Breast epithelium (tissue), 4 donors: ENCODE measurements at regions of chr2 and their contacts with region 1.

Region 1: GRCh38 chr2:221704442-221704841 is 132.3 kb upstream of the EPHA4 start:
- DNase-seq: no peak
- H3K4me3 ChIP-seq: no peak overlapping the region
- H3K27ac ChIP-seq: no peak overlapping the region
- H3K4me1 ChIP-seq: no peaks in the 10 kb centered on the region
- H3K27me3 ChIP-seq: peaks cover 0 to 6% of the 10 kb centered on the region in 2 donors
- CTCF ChIP-seq: no peak
- POLR2A ChIP-seq: no peak

Region 2: GRCh38 chr2:219812672-219813071 is 1891.8 kb before region 1 on chr2:
- intact Hi-C with region 1: loop called (anchors 5 kb)
- DNase-seq: no peak
- H3K4me3 ChIP-seq: no peak overlapping the region
- H3K27ac ChIP-seq: no peak overlapping the region
- H3K4me1 ChIP-seq: no peaks in the 10 kb centered on the region
- H3K27me3 ChIP-seq: no peaks in the 10 kb centered on the region
- CTCF ChIP-seq: no peak
- POLR2A ChIP-seq: no peak